Calu3 (cell line): ENCODE measurements at regions of chr1 and their contacts with region 1.

Region 1: GRCh38 chr1:198681831-198682759 is 43.3 kb downstream of the PTPRC start:
- DNase-seq: peak; percentile 66
- H3K4me3 Mint-ChIP-seq: peak overlapping the region; percentile 53
- H3K27ac Mint-ChIP-seq: peak overlapping the region; percentile 81
- H3K4me1 Mint-ChIP-seq: peaks cover 20% of the 10 kb centered on the region
- H3K27me3 Mint-ChIP-seq: no peaks in the 10 kb centered on the region
- CTCF ChIP-seq: no peak

Region 2: DNA sequence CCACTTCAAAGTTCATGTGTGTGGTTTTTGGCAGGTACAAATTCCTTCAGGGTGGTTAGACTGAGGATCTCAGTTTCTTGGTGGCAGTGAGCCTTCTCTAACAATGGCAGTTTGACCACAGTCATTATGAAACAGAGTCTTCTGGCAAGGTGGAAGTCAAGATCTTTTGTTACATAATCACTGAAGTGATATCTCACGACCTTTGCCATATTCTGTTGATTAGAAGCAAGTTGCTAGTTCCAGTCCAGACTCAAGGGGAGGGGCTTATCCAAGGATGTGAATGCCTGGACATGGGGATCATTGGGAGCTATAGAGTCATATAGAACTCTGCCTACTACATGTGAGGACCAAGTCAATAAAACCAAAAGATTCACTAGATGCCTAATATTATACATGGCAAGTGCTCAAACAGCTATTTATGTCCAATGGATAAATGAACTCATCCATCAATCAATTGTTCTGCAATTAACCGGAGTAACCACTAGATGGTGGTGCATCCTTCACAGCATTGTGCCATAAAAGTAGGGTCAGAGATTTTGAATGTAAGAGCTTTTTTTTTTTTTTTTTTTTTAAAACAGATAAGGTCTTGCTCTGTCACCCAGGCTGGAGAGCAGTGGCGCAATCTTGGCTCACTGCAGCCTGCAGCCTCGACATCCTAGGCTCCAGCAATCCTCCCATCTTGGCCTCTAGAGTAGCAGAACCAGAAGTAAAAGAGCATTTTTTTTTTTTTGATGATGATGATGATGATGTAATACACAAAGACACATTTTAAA is 1282.2 kb before region 1 on chr1:
- CTCF ChIA-PET with region 1: interaction called, 6 read pairs
- intact Hi-C with region 1: loop called (anchors 10 kb)
- DNase-seq: peak; percentile 52
- H3K4me3 Mint-ChIP-seq: no peak overlapping the region
- H3K27ac Mint-ChIP-seq: no peak overlapping the region
- H3K4me1 Mint-ChIP-seq: peaks cover 9% of the 10 kb centered on the region
- H3K27me3 Mint-ChIP-seq: no peaks in the 10 kb centered on the region
- CTCF ChIP-seq: peak; percentile 60

Region 3: GRCh38 chr1:197526736-197527371 is 1155.2 kb before region 1 on chr1:
- CTCF ChIA-PET with region 1: no interaction called
- intact Hi-C with region 1: loop called (anchors 5 kb)
- DNase-seq: no peak
- H3K4me3 Mint-ChIP-seq: no peak overlapping the region
- H3K27ac Mint-ChIP-seq: no peak overlapping the region
- H3K4me1 Mint-ChIP-seq: no peaks in the 10 kb centered on the region
- H3K27me3 Mint-ChIP-seq: no peaks in the 10 kb centered on the region
- CTCF ChIP-seq: peak; percentile 42

Region 4: DNA sequence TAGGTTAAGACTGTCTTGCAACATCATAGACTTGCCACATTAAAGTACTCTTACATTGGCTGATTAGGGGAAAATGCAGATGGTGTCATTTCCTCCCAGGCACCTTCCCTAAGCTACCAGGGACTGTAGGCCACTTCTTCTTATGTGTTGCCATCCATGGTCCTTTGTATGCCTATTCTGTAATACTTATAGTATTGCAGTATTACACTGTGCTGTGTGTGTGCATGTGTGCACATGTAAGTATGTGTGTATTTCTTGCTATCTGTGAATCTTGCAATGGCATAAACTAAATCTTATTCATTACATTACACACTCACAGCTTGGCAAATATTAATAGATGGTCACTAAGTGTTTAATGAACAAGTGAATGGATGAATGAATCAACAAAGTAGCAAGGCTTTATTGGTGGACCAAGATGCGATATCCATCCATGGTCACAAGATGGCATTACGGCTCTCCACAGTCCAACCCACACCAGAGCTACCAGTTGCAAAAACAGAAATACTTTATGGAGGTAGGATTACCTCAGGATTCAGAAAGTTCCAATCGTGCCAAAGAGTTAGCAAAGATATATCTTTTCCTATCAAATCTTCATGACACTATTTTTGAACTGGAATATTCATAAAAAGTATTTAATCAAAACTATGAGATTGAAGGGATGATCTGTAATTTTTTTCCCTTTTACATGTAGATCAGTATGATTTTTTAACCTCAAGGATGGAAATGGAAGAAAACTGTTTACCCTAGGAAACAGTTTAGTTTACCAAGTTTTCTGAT is 1067.0 kb before region 1 on chr1:
- CTCF ChIA-PET with region 1: interaction called, 4 read pairs
- intact Hi-C with region 1: loop called (anchors 5 kb)
- DNase-seq: peak; percentile 48
- H3K4me3 Mint-ChIP-seq: no peak overlapping the region
- H3K27ac Mint-ChIP-seq: no peak overlapping the region
- H3K4me1 Mint-ChIP-seq: no peaks in the 10 kb centered on the region
- H3K27me3 Mint-ChIP-seq: no peaks in the 10 kb centered on the region
- CTCF ChIP-seq: peak; percentile 46

Region 5: GRCh38 chr1:198283222-198283621 is 398.9 kb before region 1 on chr1:
- CTCF ChIA-PET with region 1: no interaction called
- intact Hi-C with region 1: loop called (anchors 10 kb)
- DNase-seq: no peak
- H3K4me3 Mint-ChIP-seq: no peak overlapping the region
- H3K27ac Mint-ChIP-seq: peak overlapping the region; percentile 38
- H3K4me1 Mint-ChIP-seq: peaks cover 32% of the 10 kb centered on the region
- H3K27me3 Mint-ChIP-seq: no peaks in the 10 kb centered on the region
- CTCF ChIP-seq: no peak

Region 6: GRCh38 chr1:198529414-198529813 is 152.7 kb before region 1 on chr1:
- CTCF ChIA-PET with region 1: no interaction called
- intact Hi-C with region 1: loop called (anchors 5 kb)
- DNase-seq: no peak
- H3K4me3 Mint-ChIP-seq: no peak overlapping the region
- H3K27ac Mint-ChIP-seq: no peak overlapping the region
- H3K4me1 Mint-ChIP-seq: peaks cover 17% of the 10 kb centered on the region
- H3K27me3 Mint-ChIP-seq: no peaks in the 10 kb centered on the region
- CTCF ChIP-seq: no peak

Region 7: GRCh38 chr1:199701726-199702125 is 1019.6 kb after region 1 on chr1:
- CTCF ChIA-PET with region 1: no interaction called
- intact Hi-C with region 1: no loop called
- DNase-seq: no peak
- H3K4me3 Mint-ChIP-seq: no peak overlapping the region
- H3K27ac Mint-ChIP-seq: no peak overlapping the region
- H3K4me1 Mint-ChIP-seq: no peaks in the 10 kb centered on the region
- H3K27me3 Mint-ChIP-seq: no peaks in the 10 kb centered on the region
- CTCF ChIP-seq: no peak